ENCODE measurements at regions of chr4 and their contacts with region 1.

Region 1: DNA sequence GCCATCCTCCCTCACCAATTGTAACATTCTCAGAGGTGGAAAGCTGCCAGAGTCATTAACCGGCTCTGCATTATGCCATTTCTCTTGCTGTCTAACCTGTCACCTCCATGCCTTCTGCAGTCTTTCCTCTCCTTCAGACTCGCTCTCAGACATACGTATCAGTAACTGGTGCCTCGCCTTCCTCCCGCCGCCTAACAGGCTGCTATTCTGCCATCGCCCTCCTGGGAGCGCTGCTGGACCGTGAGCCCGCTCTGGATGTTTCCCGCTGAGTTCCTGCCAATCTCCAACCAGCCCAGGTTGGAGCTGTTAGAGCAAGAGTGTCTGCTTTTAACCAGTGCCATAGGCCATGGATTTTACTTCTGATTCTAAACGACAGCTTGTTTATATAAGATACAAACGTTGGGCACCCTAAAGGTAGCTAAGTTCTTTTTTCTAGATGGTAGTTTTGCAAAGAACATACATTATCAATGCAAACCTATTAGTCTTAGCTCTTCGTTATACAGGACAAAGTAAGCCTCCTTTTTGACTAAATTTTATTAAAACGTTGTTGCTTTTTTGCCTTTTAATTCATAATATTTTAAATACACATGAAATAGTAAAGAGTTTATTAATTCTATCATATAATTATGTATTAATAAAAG is 59.5 kb upstream of the NEIL3 start:
- DNase-seq: peak; percentile 81
- H3K4me3 Mint-ChIP-seq: no peak overlapping the region
- H3K27ac Mint-ChIP-seq: no peak overlapping the region
- H3K4me1 Mint-ChIP-seq: peaks cover 9% of the 10 kb centered on the region
- H3K27me3 Mint-ChIP-seq: peaks cover 12% of the 10 kb centered on the region

Region 2: DNA sequence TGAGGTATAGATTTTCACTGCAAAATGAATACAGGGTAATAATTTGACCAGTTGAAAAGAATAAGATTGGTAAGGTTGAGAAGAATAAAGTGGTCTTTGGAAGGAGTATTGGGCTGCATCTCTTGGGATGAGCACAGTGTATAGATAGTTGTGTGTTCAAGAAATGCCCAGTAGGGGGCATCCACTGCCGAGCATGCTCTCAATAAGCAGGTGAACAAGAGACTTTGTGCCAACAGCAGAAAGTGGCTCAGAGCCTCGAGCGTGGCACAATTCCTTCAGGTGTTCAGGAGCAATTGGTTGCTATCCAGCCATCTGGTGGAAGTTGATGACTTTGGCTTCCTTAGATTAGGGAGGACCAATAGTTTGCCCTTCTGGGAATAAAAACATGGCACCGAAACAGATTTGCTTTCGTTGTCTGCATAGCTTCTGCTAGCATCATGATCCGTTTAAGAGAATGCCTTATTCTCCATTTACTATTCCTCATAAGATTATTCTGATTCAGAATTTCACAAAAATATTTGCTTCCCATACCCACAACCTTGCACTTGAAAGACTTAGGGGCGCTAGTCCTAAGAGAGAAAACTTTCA is 198.6 kb before region 1 on chr4:
- CTCF ChIA-PET with region 1: no interaction called
- POLR2A ChIA-PET with region 1: no interaction called
- intact Hi-C with region 1: no loop called
- DNase-seq: peak; percentile 16
- H3K4me3 Mint-ChIP-seq: no peak overlapping the region
- H3K27ac Mint-ChIP-seq: no peak overlapping the region
- H3K4me1 Mint-ChIP-seq: no peaks in the 10 kb centered on the region
- H3K27me3 Mint-ChIP-seq: peaks cover 3% of the 10 kb centered on the region

Region 3: DNA sequence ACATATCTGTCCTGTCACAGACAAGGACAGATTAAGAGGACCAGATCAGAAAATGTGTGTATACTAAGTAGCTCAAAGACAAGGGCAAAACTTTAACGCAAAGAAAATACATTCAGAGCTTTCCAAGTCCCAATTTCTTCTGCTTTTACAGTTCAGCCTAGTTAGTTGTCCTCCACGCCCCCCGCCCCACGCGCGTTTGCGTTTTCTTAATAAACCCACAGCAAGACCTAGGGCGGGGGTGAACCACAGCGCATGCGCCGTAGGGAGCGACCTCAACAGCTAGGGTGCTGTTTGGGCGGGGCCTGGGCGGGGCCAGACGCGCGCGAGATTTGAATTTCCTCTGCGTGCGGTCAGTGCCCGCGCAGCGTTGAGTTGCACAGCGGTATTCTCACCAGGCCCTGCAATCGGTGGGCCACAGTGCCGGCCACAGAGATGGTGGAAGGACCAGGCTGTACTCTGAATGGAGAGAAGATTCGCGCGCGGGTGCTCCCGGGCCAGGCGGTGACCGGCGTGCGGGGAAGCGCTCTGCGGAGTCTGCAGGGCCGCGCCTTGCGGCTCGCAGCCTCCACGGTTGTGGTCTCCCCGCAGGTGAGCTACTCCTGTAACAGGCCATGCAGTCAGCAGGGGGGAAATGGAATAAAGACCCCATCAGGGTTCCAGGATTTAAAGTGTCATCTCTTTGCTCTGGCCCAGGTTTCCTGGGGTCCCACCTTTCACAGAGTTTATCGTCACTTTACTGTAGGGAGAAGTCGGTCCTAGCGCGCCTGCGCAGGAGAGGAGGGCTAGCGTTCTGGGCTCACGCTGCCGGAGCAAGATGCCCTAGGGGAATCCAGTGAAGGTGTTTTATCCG is 59.6 kb after region 1 on chr4 and contains the start of gene NEIL3:
- CTCF ChIA-PET with region 1: interaction called, 10 read pairs
- POLR2A ChIA-PET with region 1: no interaction called
- intact Hi-C with region 1: loop called (anchors 2 kb)
- DNase-seq: peak; percentile 97
- H3K4me3 Mint-ChIP-seq: peak within 1 kb of the TSS; percentile 92
- H3K27ac Mint-ChIP-seq: peak within 1 kb of the TSS; percentile 79
- H3K4me1 Mint-ChIP-seq: peaks cover 25% of the 10 kb centered on the region
- H3K27me3 Mint-ChIP-seq: no peaks in the 10 kb centered on the region
- total RNA-seq, gene NEIL3: 18.2 to 18.3 TPM

Region 4: DNA sequence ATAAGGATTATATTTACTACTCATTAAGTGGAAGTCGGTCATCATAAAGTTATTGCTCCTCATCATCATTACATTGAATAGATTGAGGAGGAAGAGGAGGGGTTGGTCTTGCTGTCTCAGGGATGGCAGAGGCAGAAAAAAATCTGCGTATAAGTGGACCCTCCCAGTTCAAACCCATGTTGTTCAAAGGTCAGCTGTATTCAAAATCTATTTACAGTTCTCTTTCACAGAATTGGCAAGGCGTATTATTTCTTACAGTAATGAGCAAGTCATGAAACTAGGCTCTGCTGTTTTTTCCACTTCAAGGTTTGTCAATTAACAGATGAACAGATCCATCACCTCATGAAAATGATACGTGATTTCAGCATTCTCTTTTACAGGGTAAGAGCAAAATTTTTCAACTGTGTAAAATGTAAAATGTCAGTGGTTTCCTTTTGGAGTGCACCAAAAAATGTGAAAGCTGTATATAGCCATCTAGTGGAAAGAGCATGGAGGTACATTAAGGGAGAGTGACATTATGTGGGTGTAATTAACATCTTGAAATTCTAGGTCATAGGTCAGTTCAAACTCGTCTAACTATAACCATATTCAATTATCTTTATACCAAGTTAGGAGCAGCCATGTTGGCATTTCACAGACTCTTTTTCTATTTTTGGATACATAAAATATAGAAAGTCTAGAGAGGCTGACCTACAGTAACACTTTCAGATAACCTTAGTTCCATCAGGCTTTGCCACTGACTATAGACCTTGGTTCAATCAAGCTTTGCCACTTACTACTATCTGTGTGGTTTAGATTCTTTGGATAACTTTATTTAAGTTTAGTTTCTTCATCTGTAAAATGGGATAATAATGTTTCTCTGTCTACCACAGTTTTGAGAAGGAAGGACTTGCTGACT is 89.5 kb after region 1 on chr4:
- CTCF ChIA-PET with region 1: interaction called, 81 read pairs
- POLR2A ChIA-PET with region 1: interaction called, 3 read pairs
- intact Hi-C with region 1: loop called (anchors 1 kb)
- DNase-seq: no peak
- H3K4me3 Mint-ChIP-seq: no peak overlapping the region
- H3K27ac Mint-ChIP-seq: no peak overlapping the region
- H3K4me1 Mint-ChIP-seq: peaks cover 12% of the 10 kb centered on the region
- H3K27me3 Mint-ChIP-seq: no peaks in the 10 kb centered on the region

Region 5: DNA sequence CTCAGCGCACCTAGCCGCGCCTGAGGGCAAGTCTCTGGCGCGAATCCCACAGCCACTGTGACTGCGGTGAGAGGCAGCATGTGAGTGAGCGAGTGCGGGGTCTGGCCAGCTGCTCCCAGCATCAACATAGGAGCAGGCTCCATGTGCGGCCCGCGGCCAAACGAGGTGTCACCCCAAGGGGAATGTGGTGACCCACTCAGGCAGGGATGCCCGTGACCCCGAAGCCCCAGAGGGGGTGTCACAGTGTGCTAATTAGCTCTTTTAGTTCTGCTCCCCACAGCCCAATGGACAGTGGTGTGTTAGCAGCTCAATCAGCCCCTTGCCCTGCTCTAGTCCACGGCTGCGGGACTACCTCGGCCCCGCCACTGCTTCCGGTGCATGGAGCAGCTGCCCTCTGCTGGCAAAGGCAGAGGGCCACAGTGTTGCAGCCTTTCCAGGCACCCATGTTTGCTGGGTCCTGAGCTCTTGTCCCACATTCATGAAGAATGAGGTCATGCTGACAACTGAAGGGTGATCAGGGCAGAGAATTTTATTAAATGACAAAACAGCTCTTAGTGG is 130.6 kb after region 1 on chr4:
- CTCF ChIA-PET with region 1: interaction called, 6 read pairs
- POLR2A ChIA-PET with region 1: no interaction called
- intact Hi-C with region 1: loop called (anchors 1 kb)
- DNase-seq: no peak
- H3K4me3 Mint-ChIP-seq: no peak overlapping the region
- H3K27ac Mint-ChIP-seq: no peak overlapping the region
- H3K4me1 Mint-ChIP-seq: no peaks in the 10 kb centered on the region
- H3K27me3 Mint-ChIP-seq: peaks cover 4% of the 10 kb centered on the region

Region 6: GRCh38 chr4:177441803-177442622 is 191.8 kb after region 1 on chr4 and contains the start of gene AGA:
- CTCF ChIA-PET with region 1: interaction called, 7 read pairs
- POLR2A ChIA-PET with region 1: no interaction called
- intact Hi-C with region 1: loop called (anchors 2 kb)
- DNase-seq: peak; percentile 97
- H3K4me3 Mint-ChIP-seq: peak within 1 kb of the TSS; percentile 90
- H3K27ac Mint-ChIP-seq: peak within 1 kb of the TSS; percentile 97
- H3K4me1 Mint-ChIP-seq: peaks cover 24% of the 10 kb centered on the region
- H3K27me3 Mint-ChIP-seq: no peaks in the 10 kb centered on the region
- total RNA-seq, gene AGA: 22.1 to 22.5 TPM

Region 7: GRCh38 chr4:177555007-177555574 is 304.9 kb after region 1 on chr4:
- CTCF ChIA-PET with region 1: interaction called, 4 read pairs
- POLR2A ChIA-PET with region 1: no interaction called
- intact Hi-C with region 1: loop called (anchors 2 kb)
- DNase-seq: peak; percentile 26
- H3K4me3 Mint-ChIP-seq: no peak overlapping the region
- H3K27ac Mint-ChIP-seq: no peak overlapping the region
- H3K4me1 Mint-ChIP-seq: no peaks in the 10 kb centered on the region
- H3K27me3 Mint-ChIP-seq: no peaks in the 10 kb centered on the region